ENCODE measurements at regions of chr6 and their contacts with region 1.

Region 1: GRCh38 chr6:57172136-57173055 is at the start of gene BAG2:
- DNase-seq: peak; percentile 71 to 92 (median 82)
- ATAC-seq: peak; percentile 85
- H3K4me3 ChIP-seq: peak within 1 kb of the TSS; percentile 69
- H3K4me3 Mint-ChIP-seq: peak within 1 kb of the TSS; percentile 89
- H3K27ac ChIP-seq: peak within 1 kb of the TSS; percentile 75 to 79
- H3K27ac Mint-ChIP-seq: peak within 1 kb of the TSS; percentile 83
- H3K4me1 ChIP-seq: peaks cover 17% of the 10 kb centered on the region
- H3K4me1 Mint-ChIP-seq: peaks cover 42% of the 10 kb centered on the region
- H3K27me3 ChIP-seq: no peaks in the 10 kb centered on the region
- H3K27me3 Mint-ChIP-seq: no peaks in the 10 kb centered on the region
- CTCF ChIP-seq: no peak
- total RNA-seq, gene BAG2: 5.4 to 5.6 TPM

Region 2: DNA sequence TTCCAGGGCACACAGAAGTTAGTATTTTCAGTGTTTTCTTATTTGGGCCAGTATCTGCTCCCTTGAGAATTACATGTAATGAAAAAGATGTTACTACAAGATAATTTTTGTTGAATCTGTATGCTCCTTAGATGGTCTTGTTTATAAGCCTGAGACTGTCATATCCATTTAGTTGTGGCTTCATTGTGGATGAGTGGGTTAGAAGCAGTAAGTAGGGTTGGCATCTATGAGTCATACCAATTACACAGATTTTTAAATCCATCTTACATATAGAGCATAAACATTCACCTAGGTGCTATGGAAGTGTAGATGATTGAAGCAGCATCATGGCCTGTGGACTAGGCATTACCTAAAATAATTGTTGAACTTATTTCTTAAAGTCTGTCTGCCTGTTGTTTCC is 13.7 kb before region 1 on chr6:
- CTCF ChIA-PET with region 1: interaction called, 3 read pairs
- POLR2A ChIA-PET with region 1: interaction called, 10 read pairs
- intact Hi-C with region 1: no loop called
- DNase-seq: no peak
- ATAC-seq: no peak
- H3K4me3 ChIP-seq: no peak overlapping the region
- H3K4me3 Mint-ChIP-seq: no peak overlapping the region
- H3K27ac ChIP-seq: no peak overlapping the region
- H3K27ac Mint-ChIP-seq: no peak overlapping the region
- H3K4me1 ChIP-seq: no peaks in the 10 kb centered on the region
- H3K4me1 Mint-ChIP-seq: no peaks in the 10 kb centered on the region
- H3K27me3 ChIP-seq: no peaks in the 10 kb centered on the region
- H3K27me3 Mint-ChIP-seq: no peaks in the 10 kb centered on the region
- CTCF ChIP-seq: no peak

Region 3: DNA sequence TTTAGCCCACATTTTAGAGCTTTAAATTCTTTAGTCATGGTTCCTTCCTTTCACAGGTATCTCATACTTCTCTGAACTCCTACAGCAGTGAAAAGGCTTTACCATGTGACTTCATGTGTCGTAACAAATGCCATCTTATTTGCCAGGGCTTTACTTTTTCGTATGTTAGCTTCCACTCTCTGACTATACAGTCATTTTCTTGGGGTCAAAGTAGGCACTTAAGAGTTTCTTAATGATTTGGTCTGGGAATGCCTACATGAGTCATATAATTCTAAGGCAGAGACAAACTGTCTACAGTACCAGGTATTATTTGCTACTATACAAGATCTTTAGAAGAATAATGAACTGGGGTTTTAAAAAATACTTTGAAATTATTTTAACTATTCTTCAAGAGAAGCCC is 34.7 kb after region 1 on chr6:
- CTCF ChIA-PET with region 1: no interaction called
- POLR2A ChIA-PET with region 1: no interaction called
- intact Hi-C with region 1: no loop called
- DNase-seq: no peak
- ATAC-seq: no peak
- H3K4me3 ChIP-seq: no peak overlapping the region
- H3K4me3 Mint-ChIP-seq: no peak overlapping the region
- H3K27ac ChIP-seq: no peak overlapping the region
- H3K27ac Mint-ChIP-seq: no peak overlapping the region
- H3K4me1 ChIP-seq: no peaks in the 10 kb centered on the region
- H3K4me1 Mint-ChIP-seq: no peaks in the 10 kb centered on the region
- H3K27me3 ChIP-seq: no peaks in the 10 kb centered on the region
- H3K27me3 Mint-ChIP-seq: no peaks in the 10 kb centered on the region
- CTCF ChIP-seq: no peak

Region 4: DNA sequence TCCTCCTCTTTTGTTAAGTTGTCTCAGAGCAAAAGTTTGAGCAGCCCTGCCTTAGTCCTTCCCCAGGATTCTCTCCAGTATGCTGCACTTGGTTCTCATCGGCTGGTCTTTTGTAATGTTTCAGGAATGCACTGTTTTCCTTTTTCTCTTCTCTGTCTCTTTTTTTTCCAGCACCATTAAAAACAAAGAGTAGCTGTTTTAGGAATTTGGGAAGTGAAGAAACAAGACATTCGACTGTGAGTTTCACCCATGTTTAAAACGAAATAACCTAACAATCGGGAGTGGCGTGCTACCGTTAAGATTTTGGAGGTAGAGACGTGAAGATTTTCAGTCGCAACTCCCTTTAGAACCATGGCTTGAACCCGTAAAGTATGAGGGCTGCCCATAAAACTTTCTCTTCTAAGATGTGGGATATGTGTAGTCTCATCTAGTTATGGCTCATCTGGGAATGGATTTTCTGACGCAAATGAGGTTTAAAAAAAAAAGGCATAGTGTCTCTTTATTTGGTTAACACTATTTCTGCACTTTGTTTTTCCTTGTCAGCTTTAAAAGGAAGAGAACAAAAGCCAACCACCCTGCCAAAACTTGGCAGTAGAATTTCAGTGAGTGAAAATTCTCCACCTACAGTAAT is 85.6 kb after region 1 on chr6:
- CTCF ChIA-PET with region 1: no interaction called
- POLR2A ChIA-PET with region 1: no interaction called
- intact Hi-C with region 1: no loop called
- DNase-seq: no peak
- ATAC-seq: no peak
- H3K4me3 ChIP-seq: no peak overlapping the region
- H3K4me3 Mint-ChIP-seq: no peak overlapping the region
- H3K27ac ChIP-seq: no peak overlapping the region
- H3K27ac Mint-ChIP-seq: no peak overlapping the region
- H3K4me1 ChIP-seq: no peaks in the 10 kb centered on the region
- H3K4me1 Mint-ChIP-seq: no peaks in the 10 kb centered on the region
- H3K27me3 ChIP-seq: no peaks in the 10 kb centered on the region
- H3K27me3 Mint-ChIP-seq: no peaks in the 10 kb centered on the region
- CTCF ChIP-seq: no peak